Activated CD8-positive, alpha-beta T cell treated with anti-CD3 and anti-CD28 coated beads for 36 hours (primary cell): ENCODE measurements at regions of chr9 and their contacts with region 1.

Region 1: GRCh38 chr9:128026773-128027541 is 40.2 kb downstream of the NAIF1 start:
- DNase-seq: peak; percentile 77
- ATAC-seq: peak; percentile 50
- H3K4me3 Mint-ChIP-seq: peak overlapping the region; percentile 65
- H3K27ac Mint-ChIP-seq: peak overlapping the region; percentile 98
- H3K4me1 Mint-ChIP-seq: peaks cover 83% of the 10 kb centered on the region
- H3K27me3 Mint-ChIP-seq: no peaks in the 10 kb centered on the region
- CTCF ChIP-seq: no peak

Region 2: GRCh38 chr9:127955294-127956035 is 71.5 kb before region 1 on chr9:
- CTCF ChIA-PET with region 1: interaction called, 631 read pairs
- POLR2A ChIA-PET with region 1: interaction called, 28 read pairs
- intact Hi-C with region 1: loop called (anchors 5 kb)
- DNase-seq: peak; percentile 96
- ATAC-seq: peak; percentile 90
- H3K4me3 Mint-ChIP-seq: peak overlapping the region; percentile 46
- H3K27ac Mint-ChIP-seq: peak overlapping the region; percentile 88
- H3K4me1 Mint-ChIP-seq: peaks cover 80% of the 10 kb centered on the region
- H3K27me3 Mint-ChIP-seq: no peaks in the 10 kb centered on the region
- CTCF ChIP-seq: peak; percentile 68

Region 3: DNA sequence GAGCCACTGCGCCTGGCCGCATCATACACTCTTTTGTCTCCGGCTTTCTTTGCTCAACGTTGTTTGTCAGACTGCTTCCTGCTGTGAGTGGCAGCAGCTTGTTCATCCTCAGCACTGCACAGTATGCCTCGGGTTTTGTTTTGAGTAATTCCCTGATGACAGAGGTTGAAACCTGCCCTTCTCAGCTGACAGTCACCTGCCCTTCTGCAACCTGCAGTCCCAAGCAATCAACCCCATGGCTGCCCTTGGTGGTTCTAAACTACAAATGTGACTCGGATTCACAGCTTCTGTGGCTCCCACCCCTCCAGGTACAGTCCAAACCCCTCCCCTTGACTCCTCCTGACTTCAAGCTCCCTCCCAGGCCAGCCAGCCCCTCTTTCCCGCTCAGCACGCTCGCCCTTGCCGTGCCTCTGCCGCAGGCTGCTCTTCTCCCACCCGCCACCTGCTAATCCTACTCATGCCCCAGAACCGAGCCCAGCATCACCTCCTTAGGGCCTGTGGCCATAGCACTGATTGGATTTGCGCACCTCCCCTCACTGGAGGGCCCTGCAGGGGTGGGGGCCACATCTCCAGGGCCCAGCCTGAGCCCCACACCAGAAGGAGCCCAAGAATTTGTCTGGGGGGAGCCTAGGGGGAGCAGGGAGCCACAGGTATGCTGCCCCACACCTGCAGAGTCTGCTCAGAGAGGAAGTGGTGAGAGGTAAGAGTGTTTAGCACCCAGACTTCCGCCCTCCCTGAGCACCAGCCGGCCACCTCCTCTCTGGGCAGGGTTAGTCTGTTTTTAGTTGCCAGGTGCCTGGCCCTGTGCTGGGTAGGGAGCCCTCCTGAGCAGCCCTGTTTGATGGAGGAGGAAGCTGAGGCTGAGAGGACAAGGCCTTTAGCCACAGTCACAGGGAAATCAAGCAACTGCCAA is 56.3 kb before region 1 on chr9:
- CTCF ChIA-PET with region 1: interaction called, 631 read pairs
- POLR2A ChIA-PET with region 1: interaction called, 36 read pairs
- intact Hi-C with region 1: loop called (anchors 2 kb)
- DNase-seq: peak; percentile 90
- ATAC-seq: peak; percentile 73
- H3K4me3 Mint-ChIP-seq: peak overlapping the region; percentile 97
- H3K27ac Mint-ChIP-seq: peak overlapping the region; percentile 99
- H3K4me1 Mint-ChIP-seq: peaks cover 94% of the 10 kb centered on the region
- H3K27me3 Mint-ChIP-seq: no peaks in the 10 kb centered on the region
- CTCF ChIP-seq: no peak

Region 4: GRCh38 chr9:127980706-127981558 is 46.0 kb before region 1 on chr9 and contains the start of gene EEIG1:
- CTCF ChIA-PET with region 1: interaction called, 141 read pairs
- POLR2A ChIA-PET with region 1: interaction called, 85 read pairs
- intact Hi-C with region 1: no loop called
- DNase-seq: peak; percentile 97
- ATAC-seq: peak; percentile 87
- H3K4me3 Mint-ChIP-seq: peak within 1 kb of the TSS; percentile 97
- H3K27ac Mint-ChIP-seq: peak within 1 kb of the TSS; percentile 97
- H3K4me1 Mint-ChIP-seq: peaks cover 46% of the 10 kb centered on the region
- H3K27me3 Mint-ChIP-seq: no peaks in the 10 kb centered on the region
- CTCF ChIP-seq: no peak
- total RNA-seq, gene EEIG1: 79.7 to 81.5 TPM

Region 5: GRCh38 chr9:128007566-128008138 is 19.3 kb before region 1 on chr9:
- CTCF ChIA-PET with region 1: interaction called, 4 read pairs
- POLR2A ChIA-PET with region 1: interaction called, 27 read pairs
- intact Hi-C with region 1: loop called (anchors 2 kb)
- DNase-seq: peak; percentile 98
- ATAC-seq: peak; percentile 88
- H3K4me3 Mint-ChIP-seq: peak overlapping the region; percentile 71
- H3K27ac Mint-ChIP-seq: peak overlapping the region; percentile 92
- H3K4me1 Mint-ChIP-seq: peaks cover 41% of the 10 kb centered on the region
- H3K27me3 Mint-ChIP-seq: no peaks in the 10 kb centered on the region
- CTCF ChIP-seq: no peak

Region 6: GRCh38 chr9:128067876-128068613 is 41.1 kb after region 1 on chr9 and contains the start of gene SLC25A25:
- CTCF ChIA-PET with region 1: no interaction called
- POLR2A ChIA-PET with region 1: interaction called, 4 read pairs
- intact Hi-C with region 1: loop called (anchors 5 kb)
- DNase-seq: peak; percentile 100
- ATAC-seq: peak; percentile 89
- H3K4me3 Mint-ChIP-seq: peak within 1 kb of the TSS; percentile 96
- H3K27ac Mint-ChIP-seq: peak within 1 kb of the TSS; percentile 87
- H3K4me1 Mint-ChIP-seq: peaks cover 50% of the 10 kb centered on the region
- H3K27me3 Mint-ChIP-seq: no peaks in the 10 kb centered on the region
- CTCF ChIP-seq: no peak
- total RNA-seq, gene SLC25A25: 12.9 to 14.6 TPM